Esophagus muscularis mucosa (tissue), 4 donors: ENCODE measurements at regions of chr7 and their contacts with region 1.

Region 1: DNA sequence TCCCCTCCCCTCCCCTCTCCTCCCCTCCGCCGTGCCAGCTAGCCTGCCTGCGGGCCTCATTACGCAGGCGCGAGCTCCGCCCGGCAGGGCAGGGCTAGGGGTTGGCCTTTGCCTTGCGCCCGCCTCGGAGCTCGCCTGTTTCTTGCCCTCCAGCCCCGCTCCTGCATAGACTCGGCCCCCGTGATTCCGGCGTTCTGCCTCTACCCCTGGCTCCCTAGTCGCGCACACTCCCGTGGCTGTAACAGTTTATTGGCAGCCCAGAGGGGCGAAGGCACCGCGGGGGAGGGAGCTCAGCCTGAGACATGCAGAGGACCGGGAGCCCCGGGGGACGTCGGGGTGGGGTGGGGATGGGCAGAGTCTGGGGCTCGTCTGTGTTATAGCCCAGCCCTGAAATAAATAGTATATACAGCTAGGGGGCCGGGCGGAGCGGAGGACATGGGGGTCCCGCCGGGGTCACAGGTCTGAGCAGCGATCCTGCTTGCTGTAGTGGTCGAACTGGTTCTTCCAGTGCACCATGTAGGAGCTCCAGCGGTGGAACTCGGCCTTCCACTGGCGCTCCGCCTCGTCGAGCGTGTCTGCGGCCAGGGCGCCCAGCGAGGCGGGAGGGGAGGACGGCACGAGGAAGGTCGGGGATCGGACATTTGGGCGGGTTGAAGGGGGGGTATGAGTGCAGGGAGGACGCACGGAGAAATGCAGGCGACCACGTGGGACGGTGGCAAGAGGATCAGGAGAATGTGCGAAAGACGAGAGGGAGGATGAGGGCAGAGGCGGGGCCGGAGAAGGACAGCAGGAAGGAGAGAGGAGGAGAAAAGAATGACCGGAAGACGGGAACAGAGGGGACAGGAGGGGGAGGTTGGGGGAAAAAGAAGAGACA is 483 bp upstream of the UFSP1 start:
- DNase-seq: peak; percentile 97
- H3K4me3 ChIP-seq: peak overlapping the region; percentile 63 to 87 (median 70)
- H3K27ac ChIP-seq: peak overlapping the region; percentile 90 to 95 (median 92)
- H3K4me1 ChIP-seq: peaks cover 37 to 50% (median 44%) of the 10 kb centered on the region in 4 donors
- H3K27me3 ChIP-seq: peaks cover 4 to 20% (median 7%) of the 10 kb centered on the region in 4 donors
- CTCF ChIP-seq: no peak
- EP300 ChIP-seq: no peak
- POLR2A ChIP-seq: no peak

Region 2: DNA sequence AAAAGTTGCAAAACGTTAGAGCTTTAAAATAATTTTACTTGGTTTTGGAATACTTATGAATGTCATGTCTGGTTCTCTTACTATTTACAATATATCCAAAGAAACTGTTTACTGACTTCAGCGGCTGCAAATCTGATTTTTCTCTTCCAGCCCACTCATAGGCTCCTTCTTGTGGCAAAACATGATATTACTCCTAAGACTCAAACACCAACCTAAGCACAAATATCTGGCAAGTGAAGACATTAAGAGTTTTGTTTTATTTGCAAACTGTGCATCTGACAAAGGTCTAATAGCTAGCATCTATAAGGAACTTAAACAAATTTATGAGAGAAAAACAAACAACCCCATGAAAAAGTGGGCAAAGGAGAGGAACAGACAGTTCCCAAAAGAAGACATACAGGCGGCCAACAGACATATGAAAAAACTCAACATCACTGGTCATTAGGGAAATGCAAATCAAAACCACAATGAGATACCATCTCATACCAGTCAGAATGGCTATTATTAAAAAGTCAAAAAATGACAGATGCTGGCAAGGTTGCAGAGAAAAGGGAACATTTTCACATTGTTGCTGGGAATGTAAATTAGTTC is 940.3 kb before region 1 on chr7:
- intact Hi-C with region 1: no loop called
- DNase-seq: no peak
- H3K4me3 ChIP-seq: no peak overlapping the region
- H3K27ac ChIP-seq: no peak overlapping the region
- H3K4me1 ChIP-seq: no peaks in the 10 kb centered on the region
- H3K27me3 ChIP-seq: peaks cover 0 to 33% (median 0%) of the 10 kb centered on the region in 4 donors
- CTCF ChIP-seq: peak in 2 of 3 experiments; percentile 12 to 41
- EP300 ChIP-seq: no peak
- POLR2A ChIP-seq: no peak

Region 3: DNA sequence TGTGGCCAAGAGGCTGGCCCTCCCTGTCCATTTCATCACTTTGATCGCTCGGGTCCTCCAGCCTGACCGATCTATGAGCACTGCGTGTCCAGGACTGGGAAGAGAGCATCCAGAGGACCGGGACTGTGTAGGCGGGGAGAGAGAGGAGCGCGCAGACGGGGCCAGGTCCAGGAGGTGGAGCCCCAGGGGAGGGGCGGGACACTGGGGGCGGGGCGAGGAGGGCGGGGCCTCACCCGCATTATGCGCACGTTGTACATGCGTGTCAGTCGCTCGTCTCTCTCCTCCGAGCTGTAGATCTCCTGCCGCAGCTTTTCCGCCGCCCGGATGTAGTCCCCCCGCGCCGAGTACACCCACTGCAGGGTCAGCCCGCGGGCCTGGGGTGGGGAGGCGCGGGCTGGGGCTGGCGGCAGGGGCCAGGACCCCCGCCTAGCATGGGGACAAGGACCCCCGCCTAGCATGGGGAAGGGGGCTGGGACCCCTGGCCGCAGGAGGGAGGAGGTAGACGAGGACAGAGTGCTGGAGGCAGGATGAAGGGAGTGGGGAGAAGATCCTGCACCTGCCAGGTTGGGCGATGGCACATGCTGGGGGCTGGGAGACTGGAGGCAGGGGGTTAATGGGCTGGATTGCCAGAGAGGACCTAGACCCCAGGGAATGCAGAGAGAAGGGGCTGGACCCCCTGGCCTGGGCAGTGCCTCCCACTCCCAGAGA is 263.3 kb before region 1 on chr7:
- intact Hi-C with region 1: no loop called
- DNase-seq: peak; percentile 96
- H3K4me3 ChIP-seq: peak overlapping the region; percentile 39 to 57 (median 43)
- H3K27ac ChIP-seq: peak overlapping the region in 2 of 4 donors; percentile 21 to 40
- H3K4me1 ChIP-seq: peaks cover 8 to 14% (median 12%) of the 10 kb centered on the region in 4 donors
- H3K27me3 ChIP-seq: peaks cover 0 to 21% (median under 1%) of the 10 kb centered on the region in 4 donors
- CTCF ChIP-seq: no peak
- EP300 ChIP-seq: no peak
- POLR2A ChIP-seq: no peak

Region 4: GRCh38 chr7:100705753-100706671 is 184.0 kb before region 1 on chr7 and contains the start of gene POP7:
- intact Hi-C with region 1: loop called (anchors 10 kb)
- DNase-seq: peak; percentile 99
- H3K4me3 ChIP-seq: peak within 1 kb of the TSS; percentile 70 to 88 (median 75)
- H3K27ac ChIP-seq: peak within 1 kb of the TSS; percentile 86 to 96 (median 92)
- H3K4me1 ChIP-seq: peaks cover 16 to 26% (median 23%) of the 10 kb centered on the region in 4 donors
- H3K27me3 ChIP-seq: no peaks in the 10 kb centered on the region
- CTCF ChIP-seq: no peak
- EP300 ChIP-seq: no peak
- POLR2A ChIP-seq: peak; percentile 10
- total RNA-seq, gene POP7: 27.0 to 51.3 (median 43.7) TPM

Region 5: DNA sequence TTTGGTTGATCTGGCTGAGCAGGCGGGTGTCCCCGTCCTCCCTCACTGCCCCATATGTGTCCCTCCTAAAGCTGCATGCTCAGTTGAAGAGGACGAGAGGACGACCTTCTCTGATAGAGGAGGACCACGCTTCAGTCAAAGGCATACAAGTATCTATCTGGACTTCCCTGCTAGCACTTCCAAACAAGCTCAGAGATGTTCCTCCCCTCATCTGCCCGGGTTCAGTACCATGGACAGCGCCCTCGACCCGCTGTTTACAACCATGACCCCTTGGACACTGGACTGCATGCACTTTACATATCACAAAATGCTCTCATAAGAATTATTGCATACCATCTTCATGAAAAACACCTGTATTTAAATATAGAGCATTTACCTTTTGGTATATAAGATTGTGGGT is 168.4 kb after region 1 on chr7:
- intact Hi-C with region 1: loop called (anchors 2 kb)
- DNase-seq: no peak
- H3K4me3 ChIP-seq: no peak overlapping the region
- H3K27ac ChIP-seq: no peak overlapping the region
- H3K4me1 ChIP-seq: peaks cover 0 to 4% (median 0%) of the 10 kb centered on the region in 4 donors
- H3K27me3 ChIP-seq: peaks cover 0 to 71% (median 0%) of the 10 kb centered on the region in 4 donors
- CTCF ChIP-seq: peak in 1 of 3 experiments; percentile 17
- EP300 ChIP-seq: no peak
- POLR2A ChIP-seq: no peak

Region 6: GRCh38 chr7:101077303-101078089 is 187.5 kb after region 1 on chr7:
- intact Hi-C with region 1: loop called (anchors 5 kb)
- DNase-seq: no peak
- H3K4me3 ChIP-seq: no peak overlapping the region
- H3K27ac ChIP-seq: no peak overlapping the region
- H3K4me1 ChIP-seq: peaks cover 0 to 7% (median 2%) of the 10 kb centered on the region in 4 donors
- H3K27me3 ChIP-seq: peaks cover 0 to 3% (median 0%) of the 10 kb centered on the region in 4 donors
- CTCF ChIP-seq: peak; percentile 59 to 92 (median 71)
- EP300 ChIP-seq: no peak
- POLR2A ChIP-seq: no peak